Stomach (tissue), 19 donors: ENCODE measurements at regions of chr2 and their contacts with region 1.

Region 1: DNA sequence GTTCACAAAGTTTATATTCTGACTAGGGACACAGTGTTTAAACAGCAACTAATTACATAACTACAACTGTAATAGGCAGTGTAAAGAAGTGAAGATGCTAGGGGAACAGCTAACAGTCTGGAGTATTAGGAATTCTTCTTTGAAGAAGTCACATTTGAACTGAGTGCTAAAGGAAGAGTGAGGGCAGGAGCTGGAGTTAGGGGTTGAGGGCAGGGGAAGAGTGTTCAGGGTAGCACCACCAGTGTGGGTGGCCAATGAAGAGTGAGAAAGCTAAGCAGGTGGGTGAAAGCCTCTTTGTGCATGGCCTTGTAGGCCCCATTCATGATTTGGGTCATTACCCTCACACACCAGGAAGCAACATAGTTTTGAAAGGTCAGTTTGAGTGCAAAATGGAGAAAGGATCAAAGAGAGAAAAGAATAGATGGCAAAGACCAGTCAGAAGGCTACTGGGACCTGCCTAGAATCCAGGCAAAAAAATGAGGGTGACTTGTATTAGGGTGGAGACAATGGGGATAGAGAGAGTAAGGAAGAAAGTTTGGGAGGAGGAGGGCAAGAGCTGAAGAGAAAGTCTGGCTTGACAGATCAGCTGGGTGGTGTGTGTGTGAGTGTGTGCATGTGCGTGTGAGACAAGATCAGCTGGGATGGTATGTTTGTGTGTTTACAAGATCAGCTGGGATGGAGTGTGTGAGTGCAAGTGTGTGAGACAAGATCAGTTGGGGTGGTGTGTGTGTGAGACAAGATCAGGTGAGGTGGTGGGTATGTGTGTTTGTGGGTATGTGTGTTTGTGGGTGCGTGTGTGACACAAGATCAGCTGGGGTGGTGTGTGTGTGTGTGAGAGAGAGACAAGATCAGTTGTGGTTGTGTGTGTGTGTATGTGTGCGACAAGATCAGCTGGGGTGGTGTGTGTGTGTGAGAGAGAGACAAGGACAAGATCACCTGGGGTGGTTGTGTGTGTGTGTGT is 43.6 kb upstream of the AGPS start:
- DNase-seq: no peak
- H3K4me3 ChIP-seq: no peak overlapping the region
- H3K27ac ChIP-seq: no peak overlapping the region
- H3K4me1 ChIP-seq: peaks cover 6 to 20% (median 16%) of the 10 kb centered on the region in 4 donors
- H3K27me3 ChIP-seq: no peaks in the 10 kb centered on the region
- CTCF ChIP-seq: no peak
- EP300 ChIP-seq: no peak
- POLR2A ChIP-seq: no peak

Region 2: GRCh38 chr2:177078416-177078815 is 270.6 kb before region 1 on chr2:
- intact Hi-C with region 1: no loop called
- DNase-seq: peak; percentile 37 to 39
- H3K4me3 ChIP-seq: no peak overlapping the region
- H3K27ac ChIP-seq: peak overlapping the region in 1 of 5 donors; percentile 61
- H3K4me1 ChIP-seq: no peaks in the 10 kb centered on the region
- H3K27me3 ChIP-seq: peaks cover 0 to 4% (median 0%) of the 10 kb centered on the region in 3 donors
- CTCF ChIP-seq: no peak
- EP300 ChIP-seq: peak; percentile 37
- POLR2A ChIP-seq: no peak

Region 3: GRCh38 chr2:177731384-177731783 is 382.4 kb after region 1 on chr2:
- intact Hi-C with region 1: loop called (anchors 10 kb)
- DNase-seq: no peak
- H3K4me3 ChIP-seq: no peak overlapping the region
- H3K27ac ChIP-seq: no peak overlapping the region
- H3K4me1 ChIP-seq: peaks cover 0 to 11% (median 7%) of the 10 kb centered on the region in 4 donors
- H3K27me3 ChIP-seq: peaks cover 0 to 12% (median 0%) of the 10 kb centered on the region in 3 donors
- CTCF ChIP-seq: no peak
- EP300 ChIP-seq: no peak
- POLR2A ChIP-seq: no peak